Activated CD4-positive, alpha-beta memory T cell treated with anti-CD3 and anti-CD28 coated beads for 36 hours (primary cell): ENCODE measurements at regions of chr11 and their contacts with region 1.

Region 1: DNA sequence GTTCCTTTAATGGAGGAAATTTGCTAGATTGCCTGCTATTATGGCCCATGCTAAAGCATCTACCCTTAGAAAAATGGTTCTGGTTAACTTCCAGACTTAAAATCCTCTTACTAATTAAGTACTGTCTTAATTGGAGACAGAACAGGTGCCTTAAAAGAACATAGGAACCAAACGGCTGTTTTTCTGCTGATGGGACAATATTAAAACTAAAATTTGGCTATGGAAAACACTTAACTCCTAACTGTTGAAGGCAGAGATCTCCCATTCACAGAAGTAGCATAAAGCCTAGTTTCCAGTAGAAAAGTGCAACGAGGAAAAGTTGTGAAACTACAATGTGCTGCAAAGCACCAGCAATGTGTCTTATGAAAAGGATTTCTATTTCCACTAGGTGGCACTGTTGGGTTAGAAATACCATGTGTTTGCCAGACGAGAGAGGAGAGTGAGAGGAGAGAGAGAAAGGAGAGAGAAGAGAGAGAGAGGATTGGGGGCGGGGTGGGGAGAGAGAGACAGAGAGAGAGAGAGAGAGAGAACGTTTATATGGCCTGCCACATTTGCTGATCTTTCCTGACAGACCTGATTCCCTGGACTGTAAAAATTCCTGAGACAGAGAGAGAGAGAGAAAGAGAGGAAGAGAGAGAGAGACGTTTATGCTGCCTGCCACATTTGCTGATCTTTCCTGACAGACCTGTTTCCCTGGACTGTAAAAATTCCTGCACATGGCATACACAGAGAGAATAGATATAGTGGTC is 51.5 kb downstream of the FAM181B start:
- DNase-seq: no peak
- H3K4me3 Mint-ChIP-seq: no peak overlapping the region
- H3K27ac Mint-ChIP-seq: no peak overlapping the region
- H3K4me1 Mint-ChIP-seq: no peaks in the 10 kb centered on the region
- H3K27me3 Mint-ChIP-seq: peaks cover 13% of the 10 kb centered on the region

Region 2: DNA sequence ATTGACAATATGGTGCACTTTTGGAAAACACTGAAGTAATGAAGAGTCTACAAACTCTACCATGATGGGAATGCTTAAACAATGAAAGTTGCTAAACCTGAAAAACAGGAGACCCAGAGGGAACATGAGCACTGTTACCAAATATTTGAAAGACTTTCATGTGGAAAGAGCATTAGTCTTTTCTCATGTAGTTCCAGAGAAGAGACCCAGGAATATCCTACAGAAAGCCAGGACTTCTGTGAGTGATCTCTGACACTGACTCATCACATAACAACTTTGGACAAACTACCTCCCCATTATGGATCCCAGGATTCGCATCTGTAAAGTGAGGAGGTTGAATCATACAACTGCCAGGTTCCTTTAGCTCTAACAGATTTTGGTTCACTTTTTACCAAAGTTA is 10.7 kb before region 1 on chr11:
- CTCF ChIA-PET with region 1: no interaction called
- POLR2A ChIA-PET with region 1: no interaction called
- intact Hi-C with region 1: no loop called
- DNase-seq: no peak
- H3K4me3 Mint-ChIP-seq: no peak overlapping the region
- H3K27ac Mint-ChIP-seq: no peak overlapping the region
- H3K4me1 Mint-ChIP-seq: no peaks in the 10 kb centered on the region
- H3K27me3 Mint-ChIP-seq: peaks cover 4% of the 10 kb centered on the region

Region 3: GRCh38 chr11:82701847-82702520 is 19.8 kb after region 1 on chr11:
- CTCF ChIA-PET with region 1: interaction called, 21 read pairs
- POLR2A ChIA-PET with region 1: no interaction called
- intact Hi-C with region 1: no loop called
- DNase-seq: peak; percentile 29
- H3K4me3 Mint-ChIP-seq: no peak overlapping the region
- H3K27ac Mint-ChIP-seq: no peak overlapping the region
- H3K4me1 Mint-ChIP-seq: no peaks in the 10 kb centered on the region
- H3K27me3 Mint-ChIP-seq: peaks cover 3% of the 10 kb centered on the region